Activated CD4-positive, alpha-beta T cell treated with anti-CD3 and anti-CD28 coated beads for 36 hours (primary cell): ENCODE measurements at regions of chr6 and their contacts with region 1.

Region 1: GRCh38 chr6:157845493-157846259 is 22.6 kb downstream of the SNX9 start:
- DNase-seq: no peak
- ATAC-seq: peak; percentile 72
- H3K4me3 Mint-ChIP-seq: no peak overlapping the region
- H3K27ac Mint-ChIP-seq: peak overlapping the region; percentile 72
- H3K4me1 Mint-ChIP-seq: peaks cover 93% of the 10 kb centered on the region
- H3K27me3 Mint-ChIP-seq: no peaks in the 10 kb centered on the region

Region 2: DNA sequence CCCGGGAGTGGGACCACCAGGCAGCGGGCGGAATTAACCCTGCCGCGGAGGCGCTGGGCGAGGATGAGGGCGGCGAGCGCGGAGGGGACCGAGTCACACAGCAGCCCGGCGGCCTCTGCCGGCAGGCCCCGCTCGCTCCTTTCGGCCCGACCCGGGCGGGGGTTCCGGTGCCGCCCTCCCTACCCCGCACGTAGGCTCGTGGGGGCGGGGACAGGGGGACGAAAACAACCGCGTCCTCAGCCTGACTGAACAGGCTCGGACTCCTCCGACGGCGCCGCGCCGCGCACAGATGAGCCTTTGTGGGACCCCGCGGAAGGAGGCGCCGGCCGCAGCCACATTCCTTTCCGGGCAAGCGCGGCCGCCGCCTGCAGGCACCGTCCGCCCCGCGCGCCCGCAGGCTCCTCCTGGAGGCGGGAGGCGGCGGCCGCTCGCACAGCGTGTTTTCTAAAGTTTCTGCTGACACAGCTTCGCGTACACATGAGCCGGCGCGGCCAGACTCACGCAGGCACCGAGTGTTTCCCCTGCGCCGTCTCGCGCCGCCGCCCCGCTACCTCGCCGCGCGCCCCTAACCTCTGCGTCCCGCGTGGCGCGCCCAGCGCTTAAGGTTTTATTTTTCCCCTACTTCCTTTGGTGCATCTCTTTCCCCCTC is 824.2 kb before region 1 on chr6:
- CTCF ChIA-PET with region 1: no interaction called
- POLR2A ChIA-PET with region 1: no interaction called
- intact Hi-C with region 1: no loop called
- DNase-seq: peak; percentile 94
- ATAC-seq: peak; percentile 81
- H3K4me3 Mint-ChIP-seq: peak overlapping the region; percentile 88
- H3K27ac Mint-ChIP-seq: peak overlapping the region; percentile 100
- H3K4me1 Mint-ChIP-seq: peaks cover 53% of the 10 kb centered on the region
- H3K27me3 Mint-ChIP-seq: no peaks in the 10 kb centered on the region

Region 3: GRCh38 chr6:157169656-157170055 is 676.0 kb before region 1 on chr6:
- CTCF ChIA-PET with region 1: no interaction called
- POLR2A ChIA-PET with region 1: no interaction called
- intact Hi-C with region 1: no loop called
- DNase-seq: no peak
- ATAC-seq: no peak
- H3K4me3 Mint-ChIP-seq: no peak overlapping the region
- H3K27ac Mint-ChIP-seq: no peak overlapping the region
- H3K4me1 Mint-ChIP-seq: no peaks in the 10 kb centered on the region
- H3K27me3 Mint-ChIP-seq: no peaks in the 10 kb centered on the region

Region 4: DNA sequence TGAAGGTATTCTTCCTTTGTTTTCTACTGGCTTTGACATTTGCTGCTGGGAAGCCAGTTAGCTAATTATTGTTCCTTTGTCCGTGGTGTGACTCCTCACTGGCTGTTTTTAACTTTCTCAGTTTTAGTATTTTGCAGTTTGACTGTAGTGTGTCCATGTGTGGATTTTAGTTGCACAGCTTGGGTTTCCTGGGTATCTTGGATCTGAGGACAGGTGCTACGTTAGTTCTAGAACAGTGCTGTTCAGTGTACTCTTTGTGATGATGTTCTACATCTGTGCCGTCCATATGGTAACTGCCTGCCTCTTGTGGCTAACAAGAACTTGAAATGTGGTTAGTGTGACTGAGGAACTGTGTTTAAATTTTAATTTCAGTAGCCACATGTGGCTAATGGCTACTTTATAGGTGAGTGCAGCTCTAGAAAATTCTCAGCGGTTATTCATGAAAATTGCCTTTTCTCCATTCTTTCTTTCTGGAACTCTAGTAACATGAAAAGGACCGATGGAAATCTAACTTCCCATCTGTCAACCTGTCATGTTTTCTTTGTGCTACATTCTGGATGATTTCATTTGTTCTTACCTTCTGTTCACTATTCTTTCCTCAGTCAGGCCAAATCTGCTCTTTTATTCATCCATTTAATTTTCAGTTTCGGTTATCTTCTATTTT is 15.2 kb before region 1 on chr6:
- CTCF ChIA-PET with region 1: interaction called, 25 read pairs
- POLR2A ChIA-PET with region 1: interaction called, 3 read pairs
- intact Hi-C with region 1: loop called (anchors 2 kb)
- DNase-seq: no peak
- ATAC-seq: peak; percentile 48
- H3K4me3 Mint-ChIP-seq: peak overlapping the region; percentile 37
- H3K27ac Mint-ChIP-seq: peak overlapping the region; percentile 75
- H3K4me1 Mint-ChIP-seq: peaks cover 76% of the 10 kb centered on the region
- H3K27me3 Mint-ChIP-seq: no peaks in the 10 kb centered on the region

Region 5: GRCh38 chr6:157861814-157862213 is 16.1 kb after region 1 on chr6:
- CTCF ChIA-PET with region 1: interaction called, 5 read pairs
- POLR2A ChIA-PET with region 1: interaction called, 6 read pairs
- intact Hi-C with region 1: loop called (anchors 1 to 2 kb)
- DNase-seq: no peak
- ATAC-seq: no peak
- H3K4me3 Mint-ChIP-seq: no peak overlapping the region
- H3K27ac Mint-ChIP-seq: no peak overlapping the region
- H3K4me1 Mint-ChIP-seq: peaks cover 74% of the 10 kb centered on the region
- H3K27me3 Mint-ChIP-seq: no peaks in the 10 kb centered on the region